ENCODE measurements at regions of chr4 and their contacts with region 1.

Region 1: GRCh38 chr4:2511645-2512131 is 24.8 kb upstream of the FAM193A start:
- DNase-seq: no peak
- H3K4me3 ChIP-seq: no peak overlapping the region
- H3K27ac ChIP-seq: no peak overlapping the region
- H3K4me1 ChIP-seq: no peaks in the 10 kb centered on the region
- H3K27me3 ChIP-seq: no peaks in the 10 kb centered on the region
- CTCF ChIP-seq: no peak

Region 2: GRCh38 chr4:1512738-1513660 is 998.7 kb before region 1 on chr4:
- CTCF ChIA-PET with region 1: no interaction called
- dilution Hi-C with region 1: no loop called
- in situ Hi-C with region 1: no loop called
- intact Hi-C with region 1: no loop called
- DNase-seq: no peak
- H3K4me3 ChIP-seq: no peak overlapping the region
- H3K27ac ChIP-seq: no peak overlapping the region
- H3K4me1 ChIP-seq: no peaks in the 10 kb centered on the region
- H3K27me3 ChIP-seq: no peaks in the 10 kb centered on the region
- CTCF ChIP-seq: peak; percentile 35 to 45

Region 3: DNA sequence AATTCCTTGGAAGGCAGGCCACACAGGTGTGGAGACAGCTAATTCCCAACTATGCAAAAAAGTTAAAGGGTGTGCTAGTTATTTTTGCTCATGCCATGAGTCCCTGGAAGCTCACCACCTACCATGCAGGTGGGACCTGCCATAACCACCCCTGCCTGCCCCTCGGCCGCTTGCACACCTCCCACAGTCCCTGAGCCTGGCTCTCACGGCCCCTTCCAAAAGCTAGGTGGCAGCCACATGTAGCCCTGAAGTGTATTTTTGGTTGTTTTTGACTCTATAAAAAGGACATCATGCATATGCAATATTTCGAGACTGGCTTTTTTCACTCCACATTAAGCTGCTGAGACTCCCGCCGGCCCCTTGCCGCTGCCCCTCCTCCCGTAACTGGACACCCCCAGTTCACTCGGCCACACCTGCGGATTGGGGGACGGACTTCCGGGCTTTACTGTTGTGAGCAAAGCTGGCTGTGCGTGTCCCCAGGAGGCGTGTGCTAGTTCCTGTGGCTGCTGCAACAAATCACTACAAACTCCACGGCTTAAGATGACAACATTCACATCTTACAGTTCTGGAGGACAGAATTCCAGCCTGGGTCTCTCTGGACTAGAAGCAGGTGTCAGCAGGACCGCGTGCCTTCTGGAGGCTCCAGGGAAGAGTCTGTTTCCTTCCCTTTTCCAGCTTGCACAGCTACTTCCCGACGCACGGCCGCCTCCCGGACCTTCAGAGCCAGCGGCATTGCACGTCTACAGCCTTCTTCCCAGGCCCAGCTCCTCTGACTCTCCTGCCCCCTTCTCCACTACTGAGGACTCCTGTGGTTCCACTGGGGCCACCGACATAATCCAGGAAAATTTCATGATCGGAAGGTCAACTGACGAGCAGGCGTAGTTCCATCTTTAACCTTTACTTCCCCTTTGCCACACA is 118.1 kb before region 1 on chr4:
- CTCF ChIA-PET with region 1: no interaction called
- dilution Hi-C with region 1: loop called (anchors 5 kb)
- in situ Hi-C with region 1: no loop called
- intact Hi-C with region 1: no loop called
- DNase-seq: no peak
- H3K4me3 ChIP-seq: no peak overlapping the region
- H3K27ac ChIP-seq: no peak overlapping the region
- H3K4me1 ChIP-seq: no peaks in the 10 kb centered on the region
- H3K27me3 ChIP-seq: peaks cover 10% of the 10 kb centered on the region
- CTCF ChIP-seq: no peak

Region 4: GRCh38 chr4:2468445-2469192 is 43.1 kb before region 1 on chr4 and contains the start of gene RNF4:
- CTCF ChIA-PET with region 1: no interaction called
- dilution Hi-C with region 1: loop called (anchors 5 kb)
- in situ Hi-C with region 1: no loop called
- intact Hi-C with region 1: no loop called
- DNase-seq: peak; percentile 95
- H3K4me3 ChIP-seq: peak within 1 kb of the TSS; percentile 82 to 98 (median 95)
- H3K27ac ChIP-seq: peak within 1 kb of the TSS; percentile 74
- H3K4me1 ChIP-seq: peaks cover 18% of the 10 kb centered on the region
- H3K27me3 ChIP-seq: no peaks in the 10 kb centered on the region
- CTCF ChIP-seq: no peak
- total RNA-seq, gene RNF4: 57.3 to 60.2 TPM

Measured in mammary epithelial cell (primary cell).